Endothelial cell of umbilical vein (primary cell): ENCODE measurements at regions of chr15 and their contacts with region 1.

Region 1: DNA sequence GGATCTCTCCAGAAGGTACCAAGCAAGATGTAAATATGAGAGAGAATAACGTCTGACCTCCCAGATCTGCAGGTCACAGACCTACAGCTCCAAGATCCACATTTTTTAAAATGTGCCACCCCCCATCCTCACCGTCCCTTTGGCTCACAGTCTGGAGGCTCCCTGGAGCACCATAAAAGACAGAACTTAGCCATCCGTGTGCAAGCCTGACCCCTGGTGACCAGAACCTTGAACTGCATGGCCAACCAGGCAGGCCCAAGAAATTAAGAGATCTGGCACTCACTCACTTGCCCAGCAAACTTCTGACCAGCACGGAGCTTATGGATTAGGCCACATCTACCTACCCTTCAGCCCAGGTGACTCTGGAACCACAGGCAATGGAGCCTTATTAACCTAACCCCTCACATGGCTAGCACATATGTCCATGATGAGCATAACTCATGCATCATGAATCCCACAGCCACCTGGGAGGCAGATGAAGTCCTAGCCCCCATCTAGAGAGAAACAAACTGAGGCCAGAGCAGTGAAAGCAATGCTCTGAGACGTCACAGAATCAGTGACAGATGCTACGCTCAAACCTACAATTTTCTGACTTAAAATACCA is 275.3 kb downstream of the UACA start:
- DNase-seq: peak; percentile 77
- H3K4me3 ChIP-seq: no peak overlapping the region
- H3K27ac ChIP-seq: no peak overlapping the region
- H3K4me1 ChIP-seq: peaks cover 4% of the 10 kb centered on the region
- H3K27me3 ChIP-seq: peaks cover 0 to 4% of the 10 kb centered on the region in 2 experiments
- CTCF ChIP-seq: peak; percentile 89 to 90
- POLR2A ChIP-seq: no peak

Region 2: DNA sequence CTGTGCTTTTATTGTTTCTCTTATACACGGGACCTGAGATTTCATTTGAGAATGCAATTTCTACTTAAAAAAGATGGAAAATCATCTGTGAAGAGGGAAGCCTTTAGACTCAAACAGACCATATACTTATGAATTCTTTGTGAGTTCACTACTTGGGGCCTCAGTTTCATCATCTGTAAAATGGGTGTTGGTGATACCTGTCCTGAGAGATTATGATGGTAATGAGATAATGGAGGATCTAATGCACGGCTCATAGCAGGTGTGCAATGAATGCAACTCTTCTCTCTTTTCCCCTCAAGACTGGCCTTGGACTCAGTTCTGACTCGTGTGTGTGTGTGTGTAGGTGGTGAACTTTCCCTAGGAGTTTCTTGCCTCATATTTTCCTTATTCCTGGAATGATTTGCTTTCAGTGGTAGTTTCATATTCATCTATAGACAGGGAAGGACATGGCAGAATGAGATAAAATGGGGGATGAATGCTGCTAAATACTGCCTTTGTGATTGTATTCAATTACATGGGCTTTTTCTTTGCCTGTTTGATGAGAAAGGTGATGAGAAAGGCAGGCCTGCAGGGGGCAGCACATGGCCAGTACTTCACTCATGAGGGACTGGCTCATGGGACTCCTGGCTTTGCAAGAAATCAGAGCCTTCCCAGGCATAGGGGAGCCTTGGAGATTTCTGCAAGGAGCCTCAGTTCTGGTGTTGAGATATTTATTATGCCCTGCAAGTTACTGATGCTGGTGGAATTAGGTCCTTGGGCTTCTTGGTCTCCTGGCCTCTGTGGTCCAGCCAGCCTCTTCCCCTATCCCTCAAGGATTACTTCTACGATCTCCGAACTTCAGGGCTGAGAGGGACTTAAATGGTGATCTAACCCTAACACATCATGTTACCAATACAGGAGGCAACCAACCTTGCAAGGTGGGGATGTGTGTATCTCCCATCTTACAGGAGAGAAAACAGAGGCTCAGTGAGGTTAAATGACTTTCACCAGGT is 964.8 kb before region 1 on chr15:
- CTCF ChIA-PET with region 1: interaction called, 7 read pairs
- POLR2A ChIA-PET with region 1: no interaction called
- dilution Hi-C with region 1: no loop called
- intact Hi-C with region 1: loop called (anchors 1 kb)
- DNase-seq: peak; percentile 62
- H3K4me3 ChIP-seq: no peak overlapping the region
- H3K27ac ChIP-seq: no peak overlapping the region
- H3K4me1 ChIP-seq: no peaks in the 10 kb centered on the region
- H3K27me3 ChIP-seq: peaks cover 0 to 2% of the 10 kb centered on the region in 2 experiments
- CTCF ChIP-seq: peak; percentile 67 to 74
- POLR2A ChIP-seq: no peak

Region 3: DNA sequence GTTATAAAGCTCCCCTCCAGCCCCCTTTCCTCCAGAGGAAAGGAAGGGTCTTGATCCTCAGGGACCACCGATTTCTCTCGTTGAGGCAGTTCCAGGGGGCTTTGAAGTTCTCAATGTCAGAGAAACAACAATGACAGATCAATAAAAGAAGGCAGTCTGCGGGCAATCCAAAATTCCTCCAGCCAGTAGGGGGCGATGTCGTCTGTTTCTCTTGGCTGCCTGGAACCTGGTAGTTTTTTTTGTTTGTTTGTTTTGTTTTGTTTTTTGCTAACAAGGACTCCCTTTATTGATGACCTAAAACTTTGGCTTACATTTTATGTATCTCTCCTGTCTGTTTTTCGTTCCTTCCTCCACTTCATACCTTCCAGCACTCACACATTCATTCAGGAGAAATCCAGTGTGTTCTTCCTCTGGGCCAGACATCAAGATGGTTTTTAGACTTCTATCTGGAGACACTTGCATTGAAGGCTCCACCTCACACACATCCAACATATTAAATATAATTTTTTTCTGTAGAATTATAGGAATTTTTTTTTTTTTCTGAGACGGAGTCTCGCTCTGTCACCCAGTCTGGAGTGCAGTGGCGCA is 758.8 kb before region 1 on chr15:
- CTCF ChIA-PET with region 1: interaction called, 4 read pairs
- POLR2A ChIA-PET with region 1: no interaction called
- dilution Hi-C with region 1: no loop called
- intact Hi-C with region 1: loop called (anchors 1 kb)
- DNase-seq: peak; percentile 39
- H3K4me3 ChIP-seq: no peak overlapping the region
- H3K27ac ChIP-seq: no peak overlapping the region
- H3K4me1 ChIP-seq: no peaks in the 10 kb centered on the region
- H3K27me3 ChIP-seq: peaks cover 6 to 12% of the 10 kb centered on the region in 2 experiments
- CTCF ChIP-seq: peak; percentile 83 to 84
- POLR2A ChIP-seq: no peak

Region 4: GRCh38 chr15:70210528-70210927 is 277.6 kb before region 1 on chr15:
- CTCF ChIA-PET with region 1: no interaction called
- POLR2A ChIA-PET with region 1: no interaction called
- dilution Hi-C with region 1: no loop called
- intact Hi-C with region 1: no loop called
- DNase-seq: peak; percentile 5
- H3K4me3 ChIP-seq: no peak overlapping the region
- H3K27ac ChIP-seq: no peak overlapping the region
- H3K4me1 ChIP-seq: no peaks in the 10 kb centered on the region
- H3K27me3 ChIP-seq: peaks cover 2 to 5% of the 10 kb centered on the region in 2 experiments
- CTCF ChIP-seq: peak in 1 of 2 donors; percentile 29
- POLR2A ChIP-seq: no peak

Region 5: GRCh38 chr15:70415398-70415797 is 72.7 kb before region 1 on chr15:
- CTCF ChIA-PET with region 1: no interaction called
- POLR2A ChIA-PET with region 1: no interaction called
- dilution Hi-C with region 1: no loop called
- intact Hi-C with region 1: no loop called
- DNase-seq: no peak
- H3K4me3 ChIP-seq: no peak overlapping the region
- H3K27ac ChIP-seq: no peak overlapping the region
- H3K4me1 ChIP-seq: no peaks in the 10 kb centered on the region
- H3K27me3 ChIP-seq: no peaks in the 10 kb centered on the region
- CTCF ChIP-seq: no peak
- POLR2A ChIP-seq: no peak

Region 6: GRCh38 chr15:70461992-70462391 is 26.1 kb before region 1 on chr15:
- CTCF ChIA-PET with region 1: interaction called, 14 read pairs
- POLR2A ChIA-PET with region 1: no interaction called
- dilution Hi-C with region 1: no loop called
- intact Hi-C with region 1: loop called (anchors 2 kb)
- DNase-seq: no peak
- H3K4me3 ChIP-seq: no peak overlapping the region
- H3K27ac ChIP-seq: no peak overlapping the region
- H3K4me1 ChIP-seq: no peaks in the 10 kb centered on the region
- H3K27me3 ChIP-seq: peaks cover 3 to 6% of the 10 kb centered on the region in 2 experiments
- CTCF ChIP-seq: no peak
- POLR2A ChIP-seq: no peak

Region 7: DNA sequence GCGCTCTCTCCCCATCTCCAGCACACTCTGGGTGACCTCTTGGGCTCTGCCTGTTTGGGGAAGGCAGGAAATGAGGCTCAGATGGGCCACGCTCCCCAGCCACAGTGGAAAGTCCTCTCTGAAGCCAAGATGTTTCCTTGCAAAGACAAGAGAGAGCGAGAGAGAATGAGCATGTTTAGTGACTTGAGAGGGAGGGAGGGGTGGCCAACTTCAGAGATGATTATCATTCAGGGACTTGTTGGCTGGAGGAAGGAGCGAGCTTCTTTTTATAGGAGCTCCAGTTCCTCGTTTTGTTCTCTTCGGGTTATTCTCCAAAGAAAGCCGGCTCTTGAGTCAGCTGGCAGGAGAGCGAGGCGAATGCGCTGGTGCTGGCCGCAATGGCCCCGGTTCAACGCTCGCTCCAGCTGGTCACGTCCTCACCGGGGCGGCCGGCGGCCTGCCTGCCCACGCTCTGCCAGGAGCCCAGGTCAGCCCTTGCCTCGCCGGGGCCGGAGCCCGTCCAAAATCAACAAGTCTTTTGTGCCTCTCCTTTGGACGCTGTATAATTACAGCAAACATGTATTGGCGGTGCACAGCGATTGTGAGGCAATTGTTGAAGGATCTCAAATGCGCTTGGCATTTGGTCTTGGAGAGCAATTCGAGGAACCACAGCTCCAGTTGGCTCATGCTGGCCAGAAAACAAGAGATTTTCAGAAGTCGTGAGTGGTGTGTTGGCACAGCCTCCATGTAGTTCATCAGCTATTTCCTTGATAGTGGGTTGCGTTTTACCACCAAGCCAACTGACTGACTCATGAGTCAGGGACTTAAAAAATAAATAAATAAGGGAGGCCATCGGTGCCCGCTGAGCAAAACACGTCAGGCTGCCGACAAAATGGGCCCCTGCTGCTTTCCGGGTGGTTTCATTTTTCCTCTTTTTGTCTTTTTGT is 13.4 kb before region 1 on chr15:
- CTCF ChIA-PET with region 1: interaction called, 12 read pairs
- POLR2A ChIA-PET with region 1: no interaction called
- dilution Hi-C with region 1: no loop called
- intact Hi-C with region 1: no loop called
- DNase-seq: peak; percentile 96
- H3K4me3 ChIP-seq: peak overlapping the region in 1 of 3 experiments; percentile 27
- H3K27ac ChIP-seq: peak overlapping the region; percentile 88
- H3K4me1 ChIP-seq: peaks cover 26% of the 10 kb centered on the region
- H3K27me3 ChIP-seq: no peaks in the 10 kb centered on the region
- CTCF ChIP-seq: no peak
- POLR2A ChIP-seq: no peak